ENCODE measurements at regions of chr4 and their contacts with region 1.

Region 1: DNA sequence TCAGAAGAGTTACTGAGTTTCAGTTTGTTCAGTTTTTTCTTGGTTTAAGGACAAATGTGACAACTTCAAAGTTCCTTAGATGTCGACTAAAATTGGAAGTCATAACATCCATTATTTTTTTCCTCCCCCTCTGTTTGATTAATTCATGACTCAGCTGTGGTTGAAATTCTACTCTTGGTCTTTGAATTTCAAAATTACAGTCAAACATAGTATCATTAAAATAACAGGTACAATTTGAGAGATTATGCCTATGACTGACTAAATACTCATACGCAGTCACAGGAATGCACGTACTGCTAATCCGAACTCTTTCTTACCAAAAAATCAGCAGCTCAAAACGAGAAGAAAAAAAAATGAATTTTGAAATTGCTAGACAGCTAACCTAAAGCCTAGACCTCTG is 1434.8 kb downstream of the RAPGEF2 start:
- DNase-seq: no peak
- ATAC-seq: no peak
- H3K4me3 ChIP-seq: no peak overlapping the region
- H3K27ac ChIP-seq: no peak overlapping the region
- H3K4me1 ChIP-seq: no peaks in the 10 kb centered on the region
- H3K27me3 ChIP-seq: no peaks in the 10 kb centered on the region
- CTCF ChIP-seq: no peak

Region 2: DNA sequence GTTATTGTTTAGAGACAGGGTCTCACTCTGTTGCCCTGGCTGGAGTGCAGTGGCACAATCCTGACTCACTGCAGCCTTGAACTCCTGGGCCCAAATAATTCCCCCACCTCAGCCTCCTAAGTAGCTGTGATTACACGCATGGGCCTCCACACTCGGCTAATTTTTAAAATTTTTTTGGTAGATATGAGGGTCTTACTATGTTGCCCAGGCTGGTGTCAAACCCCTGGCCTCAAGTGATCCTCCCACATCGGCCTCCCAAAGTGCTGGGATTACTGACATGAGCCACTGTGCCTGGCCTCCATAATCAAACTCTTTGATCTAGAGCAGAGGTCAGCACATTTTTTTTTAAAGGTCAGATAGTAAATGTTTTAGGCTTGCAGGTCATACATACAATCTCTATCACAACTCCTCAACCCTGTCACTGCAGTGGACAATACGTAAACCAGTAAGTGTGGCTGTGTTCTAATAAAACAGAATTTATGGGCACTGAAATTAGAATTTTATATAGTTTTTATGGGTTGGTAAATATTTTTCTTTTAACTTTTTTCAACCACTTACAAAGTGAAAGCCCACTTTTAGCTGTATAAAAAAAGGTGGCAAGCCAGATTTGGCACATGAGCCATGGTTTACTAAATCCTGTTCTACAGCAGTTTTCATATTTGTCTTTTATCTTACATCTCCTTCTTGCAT is 1539.9 kb before region 1 on chr4:
- CTCF ChIA-PET with region 1: interaction called, 10 read pairs
- POLR2A ChIA-PET with region 1: no interaction called
- in situ Hi-C with region 1: no loop called
- intact Hi-C with region 1: no loop called
- DNase-seq: no peak
- ATAC-seq: no peak
- H3K4me3 ChIP-seq: no peak overlapping the region
- H3K27ac ChIP-seq: no peak overlapping the region
- H3K4me1 ChIP-seq: no peaks in the 10 kb centered on the region; the same call in 1 of the 2 replicates
- H3K27me3 ChIP-seq: no peaks in the 10 kb centered on the region
- CTCF ChIP-seq: no peak